ENCODE measurements at regions of chr16 and their contacts with region 1.

Region 1: GRCh38 chr16:18048853-18049546 is 287.5 kb downstream of the NPIPA8 start:
- DNase-seq: no peak
- H3K4me3 ChIP-seq: no peak overlapping the region
- H3K27ac ChIP-seq: peak overlapping the region in 16 of 59 donors; percentile 2 to 59 (median 22)
- H3K27me3 ChIP-seq: peaks cover 0 to 7% (median 0%) of the 10 kb centered on the region in 45 donors
- CTCF ChIP-seq: no peak

Region 2: DNA sequence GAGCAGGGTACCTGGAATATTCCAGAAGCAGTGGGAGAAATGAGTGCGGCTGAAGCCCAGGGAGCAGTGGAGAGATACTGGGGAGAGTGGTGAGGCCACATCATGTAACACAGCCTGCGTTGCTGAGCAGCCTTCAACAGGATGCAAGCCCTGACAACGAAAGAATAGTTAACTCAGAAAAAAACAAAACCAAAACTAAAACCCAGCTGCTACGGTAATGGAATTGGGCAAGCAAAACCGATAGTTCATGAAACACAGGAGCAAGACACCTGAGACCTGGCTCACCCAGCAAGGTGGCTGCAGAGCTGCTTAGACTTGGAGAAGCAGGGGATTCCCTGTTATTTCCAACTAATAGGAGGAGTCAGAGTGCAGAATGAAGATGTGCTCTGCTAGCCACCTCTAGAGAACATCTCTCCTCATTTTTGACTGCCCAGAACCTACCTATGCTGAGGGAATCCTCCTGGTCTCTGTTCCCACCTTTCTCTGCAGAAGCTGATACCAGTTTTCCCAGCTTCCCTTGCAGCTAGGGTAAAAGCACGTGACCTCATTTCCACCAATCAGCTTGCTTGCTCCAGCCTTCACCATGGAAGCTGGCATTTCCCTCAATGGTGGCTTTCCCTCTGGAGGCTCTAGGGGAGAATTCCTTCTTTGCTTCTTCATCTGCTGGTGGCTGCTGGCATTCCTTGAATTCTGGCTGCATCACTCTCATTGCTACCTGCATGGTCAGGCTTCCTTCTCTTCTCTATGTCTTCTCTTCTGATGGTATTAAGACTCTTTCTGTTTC is 518.8 kb before region 1 on chr16:
- intact Hi-C with region 1: loop called in 1 of 2 experiments (anchors 10 kb)
- DNase-seq: no peak
- H3K4me3 ChIP-seq: no peak overlapping the region
- H3K27ac ChIP-seq: no peak overlapping the region
- H3K27me3 ChIP-seq: no peaks in the 10 kb centered on the region
- CTCF ChIP-seq: no peak

Region 3: GRCh38 chr16:17989255-17989654 is 59.7 kb before region 1 on chr16:
- intact Hi-C with region 1: no loop called
- DNase-seq: no peak
- H3K4me3 ChIP-seq: no peak overlapping the region
- H3K27ac ChIP-seq: no peak overlapping the region
- H3K27me3 ChIP-seq: peaks cover 0 to 59% (median 7%) of the 10 kb centered on the region in 45 donors
- CTCF ChIP-seq: no peak